Kidney (tissue), 22 donors: ENCODE measurements at regions of chr19 and their contacts with region 1.

Region 1: DNA sequence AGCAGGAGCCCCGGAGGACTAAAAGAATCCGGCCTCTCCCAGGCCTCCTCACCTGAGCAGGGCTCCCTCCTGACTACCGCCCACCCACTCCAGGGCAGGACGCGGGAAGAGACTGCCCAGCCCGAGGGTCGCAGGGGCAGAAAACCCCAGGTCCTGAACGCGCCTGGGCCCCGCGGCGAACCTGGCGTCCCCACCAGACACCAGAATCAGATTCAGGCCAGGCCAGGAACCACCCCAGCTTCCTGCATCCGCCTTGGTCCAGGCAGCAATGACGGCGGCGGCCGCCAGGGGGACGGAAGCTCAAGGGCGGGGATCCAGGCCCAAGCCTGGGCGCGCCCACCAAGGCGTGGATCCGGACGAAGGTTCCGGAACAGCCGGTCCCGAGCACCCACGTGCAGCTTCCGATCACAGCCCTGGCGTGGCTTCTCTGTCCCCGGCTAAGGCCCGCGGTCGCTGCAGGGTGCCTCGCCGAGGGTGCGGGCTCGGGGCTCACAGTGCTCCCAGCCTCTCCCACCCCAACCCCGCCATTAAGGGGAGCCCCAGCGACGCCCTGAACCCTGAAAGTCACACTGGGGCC is 3.6 kb downstream of the LGALS7 start:
- DNase-seq: peak; percentile 74 to 97 (median 91)
- H3K4me3 ChIP-seq: no peak overlapping the region
- H3K27ac ChIP-seq: peak overlapping the region in 1 of 2 donors; percentile 47
- H3K4me1 ChIP-seq: peaks cover 0 to 2% (median 0%) of the 10 kb centered on the region in 3 donors
- H3K27me3 ChIP-seq: no peaks in the 10 kb centered on the region
- CTCF ChIP-seq: peak; percentile 76

Region 2: DNA sequence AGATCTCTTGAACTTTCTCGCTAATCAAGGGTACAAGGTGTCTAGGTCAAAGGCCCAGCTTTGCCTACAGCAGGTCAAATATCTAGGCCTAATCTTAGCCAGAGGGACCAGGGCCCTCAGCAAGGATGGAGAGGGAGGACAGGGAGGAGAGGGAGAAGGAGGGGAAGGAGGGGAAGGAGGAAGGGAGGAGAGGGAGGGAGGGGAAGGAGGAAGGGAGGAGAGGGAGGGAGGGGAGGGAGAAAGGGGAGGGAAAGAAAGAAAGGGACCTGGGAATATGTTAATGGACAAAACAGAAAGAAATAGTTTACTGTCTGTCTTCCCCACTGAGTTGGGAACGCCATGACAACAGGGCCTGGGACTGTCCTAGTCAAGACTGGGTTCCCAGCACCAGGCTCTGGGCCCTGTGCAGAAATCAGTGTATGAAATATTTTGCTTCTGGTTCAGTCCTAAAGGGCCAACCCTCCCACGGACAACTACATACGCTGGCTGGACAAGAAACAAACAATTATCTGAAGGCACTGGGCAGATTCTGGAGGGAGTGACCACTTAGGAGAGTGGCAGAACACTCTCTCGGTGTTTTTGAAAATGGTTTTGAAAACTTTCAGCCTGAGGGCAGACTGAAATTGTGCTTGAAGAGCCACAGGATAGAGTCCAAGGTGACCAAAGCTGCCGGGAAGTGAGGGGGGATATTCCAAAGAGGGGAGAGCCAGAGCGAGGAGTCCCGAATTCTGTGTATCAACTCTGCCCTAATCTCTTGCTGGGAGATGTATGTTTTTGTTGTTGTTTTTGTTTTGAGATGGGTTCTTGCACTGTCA is 57.4 kb after region 1 on chr19:
- intact Hi-C with region 1: loop called (anchors 10 kb)
- DNase-seq: no peak
- H3K4me3 ChIP-seq: no peak overlapping the region
- H3K27ac ChIP-seq: peak overlapping the region in 1 of 2 donors; percentile 4
- H3K4me1 ChIP-seq: peaks cover 0 to 11% (median 5%) of the 10 kb centered on the region in 3 donors
- H3K27me3 ChIP-seq: no peaks in the 10 kb centered on the region
- CTCF ChIP-seq: no peak